Esophagus muscularis mucosa (tissue), 4 donors: ENCODE measurements at regions of chr5 and their contacts with region 1.

Region 1: GRCh38 chr5:179166886-179167841 is 107.0 kb downstream of the ZNF354C start:
- DNase-seq: no peak
- H3K4me3 ChIP-seq: peak overlapping the region; percentile 37 to 43 (median 40)
- H3K27ac ChIP-seq: no peak overlapping the region
- H3K4me1 ChIP-seq: peaks cover 3 to 19% (median 16%) of the 10 kb centered on the region in 4 donors
- H3K27me3 ChIP-seq: no peaks in the 10 kb centered on the region
- CTCF ChIP-seq: peak; percentile 89 to 99 (median 98)
- EP300 ChIP-seq: no peak
- POLR2A ChIP-seq: no peak

Region 2: GRCh38 chr5:179123491-179124272 is 43.5 kb before region 1 on chr5:
- intact Hi-C with region 1: no loop called
- DNase-seq: no peak
- H3K4me3 ChIP-seq: no peak overlapping the region
- H3K27ac ChIP-seq: no peak overlapping the region
- H3K4me1 ChIP-seq: no peaks in the 10 kb centered on the region
- H3K27me3 ChIP-seq: no peaks in the 10 kb centered on the region
- CTCF ChIP-seq: no peak
- EP300 ChIP-seq: no peak
- POLR2A ChIP-seq: no peak

Region 3: GRCh38 chr5:179345433-179346321 is 178.5 kb after region 1 on chr5 and contains the start of gene ADAMTS2:
- intact Hi-C with region 1: loop called (anchors 1 kb)
- DNase-seq: no peak
- H3K4me3 ChIP-seq: peak within 1 kb of the TSS; percentile 71 to 80 (median 77)
- H3K27ac ChIP-seq: peak within 1 kb of the TSS; percentile 70 to 79 (median 76)
- H3K4me1 ChIP-seq: peaks cover 11 to 46% (median 40%) of the 10 kb centered on the region in 4 donors
- H3K27me3 ChIP-seq: peaks cover 0 to 40% (median 0%) of the 10 kb centered on the region in 4 donors
- CTCF ChIP-seq: no peak
- EP300 ChIP-seq: no peak
- POLR2A ChIP-seq: no peak
- total RNA-seq, gene ADAMTS2: 17.8 to 31.8 (median 21.4) TPM

Region 4: GRCh38 chr5:179404321-179405053 is 237.3 kb after region 1 on chr5:
- intact Hi-C with region 1: loop called (anchors 5 kb)
- DNase-seq: peak; percentile 87
- H3K4me3 ChIP-seq: no peak overlapping the region
- H3K27ac ChIP-seq: no peak overlapping the region
- H3K4me1 ChIP-seq: peaks cover 0 to 14% (median 0%) of the 10 kb centered on the region in 4 donors
- H3K27me3 ChIP-seq: no peaks in the 10 kb centered on the region
- CTCF ChIP-seq: peak; percentile 22 to 47 (median 23)
- EP300 ChIP-seq: no peak
- POLR2A ChIP-seq: no peak

Region 5: DNA sequence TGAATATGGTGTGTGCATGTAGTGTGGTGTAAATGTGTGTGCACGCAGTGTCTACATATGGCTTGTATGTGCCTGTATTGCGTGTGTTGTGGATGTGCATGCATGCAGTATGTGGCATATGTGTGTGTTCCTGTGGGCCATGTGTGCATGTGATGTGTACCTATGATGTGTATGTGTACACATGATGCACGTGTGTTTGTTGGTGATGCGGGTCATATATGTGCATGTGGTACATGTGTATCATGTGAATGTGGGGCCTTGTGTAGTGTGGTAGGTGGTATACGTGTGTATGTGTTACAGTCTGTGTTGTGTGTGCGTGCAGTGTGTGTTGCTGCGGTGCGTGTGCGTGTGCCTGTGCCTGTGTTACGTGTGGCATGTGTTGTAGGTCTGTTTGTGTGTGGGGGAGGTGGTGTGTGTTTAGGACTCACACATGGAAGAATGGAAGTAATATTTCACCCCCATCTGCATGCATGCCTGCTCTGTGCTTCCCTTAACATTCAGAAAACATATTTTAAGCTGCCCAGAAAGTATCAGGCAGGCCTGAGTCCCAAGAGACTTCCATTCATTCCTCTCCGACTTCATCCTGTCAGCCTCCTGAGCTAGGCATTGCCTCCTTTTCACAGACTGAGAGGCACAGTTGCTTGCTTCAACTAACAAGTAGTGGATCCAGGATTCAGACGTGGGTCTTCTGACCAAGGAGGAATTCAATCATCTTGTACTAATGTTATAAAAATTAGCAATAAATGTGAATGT is 327.8 kb after region 1 on chr5:
- intact Hi-C with region 1: loop called (anchors 1 kb)
- DNase-seq: no peak
- H3K4me3 ChIP-seq: no peak overlapping the region
- H3K27ac ChIP-seq: no peak overlapping the region
- H3K4me1 ChIP-seq: no peaks in the 10 kb centered on the region
- H3K27me3 ChIP-seq: peaks cover 0 to 35% (median 2%) of the 10 kb centered on the region in 4 donors
- CTCF ChIP-seq: no peak
- EP300 ChIP-seq: no peak
- POLR2A ChIP-seq: no peak